ENCODE measurements at regions of chr7 and their contacts with region 1.

Region 1: DNA sequence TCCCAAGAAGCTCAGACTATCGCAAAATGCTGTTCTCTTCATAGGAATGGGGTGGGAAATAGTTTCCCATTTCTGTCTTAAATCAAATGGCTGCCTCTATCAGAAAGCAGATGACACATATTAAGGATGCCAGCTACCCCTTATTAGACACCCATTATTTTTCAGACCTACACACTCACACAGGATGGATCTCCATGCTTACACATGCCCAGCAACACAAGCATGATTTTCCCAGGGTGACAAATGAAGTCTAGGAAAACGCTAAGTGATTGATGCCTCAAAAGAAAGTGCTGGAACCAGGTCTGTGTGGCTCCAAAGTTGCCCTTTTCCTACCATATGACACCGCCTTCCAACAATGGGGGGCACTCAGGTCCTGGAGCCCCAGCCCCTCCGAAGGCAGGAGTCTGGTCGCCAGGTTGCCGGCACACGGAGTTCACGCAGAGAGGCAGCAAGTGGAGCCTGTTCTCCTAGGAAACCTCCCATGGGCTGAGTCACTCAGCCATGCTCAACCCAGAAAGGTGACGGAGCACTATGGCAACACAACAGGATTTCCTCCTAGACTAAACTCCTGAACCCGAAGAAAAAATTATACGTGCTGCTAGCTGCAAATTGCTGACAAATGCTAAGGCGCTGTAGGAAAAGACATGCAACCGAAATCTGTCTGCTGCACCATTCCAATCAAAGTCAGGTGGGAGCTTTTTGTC is 19.8 kb downstream of the VOPP1 start:
- DNase-seq: peak; percentile 96
- H3K4me3 ChIP-seq: peak overlapping the region in 2 of 3 experiments; percentile 22 to 43
- H3K27ac ChIP-seq: peak overlapping the region; percentile 82
- H3K4me1 ChIP-seq: peaks cover 49% of the 10 kb centered on the region
- H3K27me3 ChIP-seq: no peaks in the 10 kb centered on the region
- CTCF ChIP-seq: no peak
- POLR2A ChIP-seq: no peak

Region 2: DNA sequence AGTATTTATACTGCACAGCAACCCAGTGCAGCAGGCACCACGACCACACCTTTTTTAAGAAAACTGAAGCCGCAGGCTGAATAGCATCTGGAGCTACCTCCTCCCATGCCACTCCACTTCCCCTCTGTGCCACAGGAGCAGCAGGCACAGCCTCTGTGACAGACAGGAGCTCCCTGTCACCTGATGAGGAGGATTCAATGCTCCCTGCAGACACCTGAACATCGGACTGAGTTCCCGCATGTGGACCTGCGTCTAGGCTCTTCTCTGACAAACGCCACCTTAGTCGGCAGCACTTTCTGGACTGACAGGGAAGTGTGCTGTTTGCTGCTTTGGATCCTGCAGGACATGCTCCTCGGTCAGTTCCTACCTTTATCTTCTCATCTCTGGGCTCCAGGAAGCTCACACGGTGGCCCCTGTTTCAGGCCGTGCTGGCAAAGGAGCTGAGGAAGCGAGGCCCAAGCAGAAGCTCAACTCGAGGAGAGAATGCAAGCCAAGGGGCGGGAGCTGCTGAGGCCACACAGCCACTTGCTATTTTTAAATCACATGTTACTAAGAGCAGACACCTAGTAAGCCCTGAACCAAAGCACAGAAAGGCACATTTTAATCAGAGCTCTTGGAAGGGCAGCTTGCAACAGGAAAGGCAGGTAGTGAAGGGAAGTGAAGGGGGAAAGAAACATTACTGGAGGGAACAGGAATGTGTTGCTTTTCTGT is 36.7 kb before region 1 on chr7:
- CTCF ChIA-PET with region 1: no interaction called
- POLR2A ChIA-PET with region 1: no interaction called
- dilution Hi-C with region 1: no loop called
- intact Hi-C with region 1: loop called (anchors 1 kb)
- DNase-seq: no peak
- H3K4me3 ChIP-seq: no peak overlapping the region
- H3K27ac ChIP-seq: no peak overlapping the region
- H3K4me1 ChIP-seq: no peaks in the 10 kb centered on the region
- H3K27me3 ChIP-seq: no peaks in the 10 kb centered on the region
- CTCF ChIP-seq: no peak
- POLR2A ChIP-seq: no peak

Region 3: GRCh38 chr7:55565681-55566080 is 13.2 kb after region 1 on chr7:
- CTCF ChIA-PET with region 1: interaction called, 13 read pairs
- POLR2A ChIA-PET with region 1: no interaction called
- dilution Hi-C with region 1: no loop called
- intact Hi-C with region 1: no loop called
- DNase-seq: no peak
- H3K4me3 ChIP-seq: no peak overlapping the region
- H3K27ac ChIP-seq: no peak overlapping the region
- H3K4me1 ChIP-seq: peaks cover 42% of the 10 kb centered on the region
- H3K27me3 ChIP-seq: no peaks in the 10 kb centered on the region
- CTCF ChIP-seq: no peak
- POLR2A ChIP-seq: no peak

Region 4: GRCh38 chr7:55572378-55573233 is 20.1 kb after region 1 on chr7 and contains the start of gene VOPP1:
- CTCF ChIA-PET with region 1: interaction called, 10 read pairs
- POLR2A ChIA-PET with region 1: interaction called, 4 read pairs
- dilution Hi-C with region 1: no loop called
- intact Hi-C with region 1: loop called (anchors 1 kb)
- DNase-seq: peak; percentile 61
- H3K4me3 ChIP-seq: peak within 1 kb of the TSS; percentile 89 to 99 (median 97)
- H3K27ac ChIP-seq: peak within 1 kb of the TSS; percentile 97
- H3K4me1 ChIP-seq: peaks cover 55% of the 10 kb centered on the region
- H3K27me3 ChIP-seq: no peaks in the 10 kb centered on the region
- CTCF ChIP-seq: no peak
- POLR2A ChIP-seq: peak; percentile 41
- total RNA-seq, gene VOPP1: 154 and 159 TPM in 2 replicates

Measured in endothelial cell of umbilical vein (primary cell).